SK-N-SH (cell line): ENCODE measurements at regions of chr4 and their contacts with region 1.

Region 1: DNA sequence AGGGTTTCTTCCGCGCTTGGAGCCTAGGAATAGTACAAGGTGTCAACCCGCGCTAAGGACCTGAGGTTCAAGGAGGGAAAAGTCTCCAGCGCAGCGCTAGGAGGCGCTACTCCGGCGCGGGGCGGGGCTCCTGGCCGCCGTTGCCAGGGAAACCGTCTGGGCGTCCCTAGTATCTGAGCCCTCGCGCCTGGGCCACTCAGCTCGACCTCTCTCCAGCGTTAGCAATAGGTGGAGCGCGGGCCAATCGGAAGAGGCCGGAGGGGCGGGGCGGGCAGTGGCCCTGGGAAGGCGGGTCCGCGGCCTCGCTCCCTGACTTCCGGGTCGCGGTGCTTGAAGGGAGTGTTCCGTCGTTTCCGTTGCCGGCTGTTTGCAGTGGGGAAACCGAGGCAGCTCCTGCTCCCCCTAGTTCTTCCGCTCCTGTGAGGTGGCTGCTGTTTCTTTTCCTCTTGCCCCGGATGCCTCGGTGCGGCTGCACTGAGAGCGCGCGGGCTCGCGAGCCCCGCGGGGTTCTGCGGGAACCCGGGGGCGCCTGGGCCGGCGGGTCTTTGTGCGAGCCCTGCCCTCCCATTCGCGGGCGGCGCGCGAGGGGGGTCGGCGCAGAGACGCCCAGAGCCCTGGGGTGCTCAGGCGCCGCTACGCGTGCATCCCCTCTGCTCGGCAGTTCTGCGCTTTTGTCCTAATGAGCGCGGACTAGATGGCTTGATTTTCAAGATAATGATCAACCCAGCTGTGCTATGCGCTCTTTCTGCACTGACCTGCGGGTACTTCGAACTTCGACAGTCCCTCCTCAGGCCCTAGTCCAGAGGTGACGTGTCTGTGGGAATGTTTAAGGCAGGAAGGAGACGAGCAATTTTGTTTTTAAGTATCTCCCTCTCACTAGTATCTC is at the start of gene ELMOD2:
- DNase-seq: peak; percentile 98
- H3K4me3 ChIP-seq: peak within 1 kb of the TSS; percentile 82 to 93
- H3K27ac ChIP-seq: peak within 1 kb of the TSS; percentile 58 to 93
- H3K4me1 ChIP-seq: peaks cover 9 to 11% of the 10 kb centered on the region in 2 experiments; a peak in 3 of 4 replicates
- H3K27me3 ChIP-seq: no peaks in the 10 kb centered on the region
- CTCF ChIP-seq: peak; percentile 95
- EP300 ChIP-seq: peak; percentile 9 to 18; a peak in 2 of 4 replicates
- RAD21 ChIP-seq: peak; percentile 55
- polyA plus RNA-seq, gene ELMOD2: 5.0 and 7.1 TPM in 2 replicates

Region 2: DNA sequence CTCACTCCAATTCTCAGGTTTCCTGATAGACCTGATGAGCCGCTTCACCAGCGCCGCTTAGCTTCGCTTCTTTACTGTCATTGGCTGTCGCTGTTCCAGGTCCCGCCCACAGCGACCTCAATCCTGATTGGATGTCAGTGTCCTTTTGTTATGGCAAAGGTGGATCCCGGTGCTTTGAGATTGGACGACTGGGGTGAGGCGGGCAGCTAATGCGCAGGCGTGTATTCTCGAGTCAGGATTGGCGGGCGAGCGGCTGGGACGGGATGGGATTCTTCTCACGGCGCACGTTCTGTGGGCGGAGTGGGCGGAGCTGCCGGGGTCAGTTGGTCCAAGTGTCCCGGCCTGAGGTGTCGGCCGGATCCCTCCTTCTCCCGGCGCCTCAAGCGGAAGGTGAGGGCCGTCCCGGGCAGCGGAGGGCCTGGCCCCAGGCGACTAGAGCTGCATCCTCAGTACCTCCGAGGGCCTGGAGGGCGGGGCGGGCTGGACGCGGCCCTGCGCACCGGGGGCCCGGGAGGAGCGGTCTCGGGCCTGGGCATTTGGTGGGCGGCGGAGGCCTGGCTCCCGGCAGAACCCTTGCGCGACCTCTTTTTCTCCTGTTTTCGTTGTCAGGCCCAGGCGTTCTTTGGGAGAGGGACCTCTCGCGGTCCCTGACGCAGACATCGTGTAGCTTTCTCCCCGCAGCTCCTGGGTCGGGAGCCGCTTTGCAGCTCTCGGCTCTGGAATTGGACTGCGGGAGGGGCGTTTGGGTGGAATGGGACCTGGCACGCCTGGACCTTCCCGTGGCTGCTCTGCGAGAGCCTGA is 150.6 kb before region 1 on chr4 and contains the start of gene SCOC:
- CTCF ChIA-PET with region 1: no interaction called
- POLR2A ChIA-PET with region 1: interaction called, 13 read pairs
- DNase-seq: peak; percentile 95
- H3K4me3 ChIP-seq: peak within 1 kb of the TSS; percentile 88 to 93
- H3K27ac ChIP-seq: peak within 1 kb of the TSS; percentile 85 to 95
- H3K4me1 ChIP-seq: peaks cover 22 to 23% of the 10 kb centered on the region in 2 experiments; a peak in 3 of 4 replicates
- H3K27me3 ChIP-seq: no peaks in the 10 kb centered on the region
- CTCF ChIP-seq: no peak
- EP300 ChIP-seq: no peak
- RAD21 ChIP-seq: no peak
- polyA plus RNA-seq, gene SCOC: 16.0 and 26.8 TPM in 2 replicates

Region 3: DNA sequence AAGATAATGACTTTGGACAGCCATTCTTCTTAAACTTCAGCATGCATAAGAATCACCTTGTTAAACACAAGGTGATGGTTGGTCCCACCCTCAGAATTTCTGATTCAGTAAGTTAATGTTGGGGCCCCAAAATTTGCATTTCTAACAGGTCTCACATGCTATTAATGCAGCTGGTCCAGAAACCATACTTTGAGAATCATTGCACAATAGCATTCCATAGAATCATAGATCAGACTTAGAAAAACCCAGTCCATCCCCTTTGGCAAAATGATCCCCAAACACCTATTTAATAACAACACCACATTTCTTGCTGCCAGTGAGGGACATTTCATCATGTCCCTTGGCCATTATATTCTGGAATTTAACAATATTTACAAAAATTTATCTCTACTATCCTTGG is 19.8 kb before region 1 on chr4:
- CTCF ChIA-PET with region 1: interaction called, 11 read pairs
- POLR2A ChIA-PET with region 1: no interaction called
- DNase-seq: no peak
- H3K4me3 ChIP-seq: no peak overlapping the region
- H3K27ac ChIP-seq: no peak overlapping the region
- H3K4me1 ChIP-seq: no peaks in the 10 kb centered on the region
- H3K27me3 ChIP-seq: 0 out of 2 replicates have a peak, but pooled peaks cover 10% of the 10 kb centered on the region
- CTCF ChIP-seq: no peak
- EP300 ChIP-seq: no peak
- RAD21 ChIP-seq: no peak

Region 4: DNA sequence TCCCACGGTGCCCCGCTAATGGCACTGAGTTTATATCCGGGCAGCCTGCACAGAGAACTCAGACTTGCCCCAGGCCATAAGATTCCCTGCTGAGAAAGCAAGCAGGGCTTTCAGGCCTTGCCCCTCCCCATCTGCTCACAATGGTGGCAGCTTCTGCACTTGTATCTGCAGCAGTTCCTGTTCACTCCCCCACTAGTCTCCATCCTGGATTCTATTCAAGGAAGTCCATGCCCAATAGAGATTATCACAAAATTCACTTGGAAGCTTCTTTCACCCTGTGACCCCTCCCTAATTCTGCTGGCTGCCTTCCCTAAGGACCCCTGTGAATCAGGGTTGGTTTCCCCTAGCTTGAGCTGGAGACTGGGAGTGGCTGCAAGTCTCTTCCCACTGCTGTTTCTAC is 79.2 kb after region 1 on chr4:
- CTCF ChIA-PET with region 1: no interaction called
- POLR2A ChIA-PET with region 1: no interaction called
- DNase-seq: no peak
- H3K4me3 ChIP-seq: no peak overlapping the region
- H3K27ac ChIP-seq: no peak overlapping the region
- H3K4me1 ChIP-seq: no peaks in the 10 kb centered on the region; a peak in 1 of 4 replicates
- H3K27me3 ChIP-seq: peaks cover 8% of the 10 kb centered on the region; the same call in 1 of the 2 replicates
- CTCF ChIP-seq: no peak
- EP300 ChIP-seq: no peak
- RAD21 ChIP-seq: no peak